Common myeloid progenitor, CD34-positive (primary cell): ENCODE measurements at regions of chr11 and their contacts with region 1.

Region 1: DNA sequence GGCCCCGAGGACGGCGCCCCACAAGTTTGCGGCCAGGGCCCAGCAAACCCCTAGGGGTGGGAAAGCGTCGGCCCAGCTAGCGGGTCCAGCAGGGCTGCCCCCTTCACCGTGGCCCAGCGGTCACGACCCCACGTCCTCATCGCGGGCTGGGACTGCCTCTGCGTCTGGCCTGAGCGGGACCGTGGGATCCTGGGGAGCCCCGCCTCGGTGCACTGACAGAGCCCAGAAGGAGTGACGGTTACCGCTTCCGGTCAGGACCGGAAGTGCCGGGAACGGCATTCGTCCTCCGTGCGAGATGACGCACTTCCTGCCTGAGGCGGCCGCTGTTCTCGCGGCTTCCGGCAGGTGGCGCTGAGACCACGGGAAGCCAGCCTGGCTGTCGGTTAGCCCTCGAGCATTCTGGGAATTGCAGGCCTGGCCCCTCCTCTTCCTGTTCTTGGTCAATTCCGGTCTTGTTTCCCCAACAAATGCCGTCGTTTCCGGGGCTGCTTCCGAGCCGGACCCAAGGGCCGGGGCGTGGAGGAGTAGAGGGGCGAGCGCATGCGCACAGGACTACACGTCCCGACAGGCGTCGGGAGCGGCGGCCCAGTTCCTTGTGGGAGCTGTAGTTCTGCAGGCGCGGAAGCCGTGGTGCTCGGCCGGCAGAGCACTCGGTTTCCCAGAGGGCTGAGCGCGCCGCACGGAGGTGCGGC is at the start of gene TSSC4:
- DNase-seq: peak; percentile 100
- H3K4me3 ChIP-seq: peak within 1 kb of the TSS; percentile 90 to 100 (median 99)
- H3K27ac ChIP-seq: peak within 1 kb of the TSS; percentile 96 to 97
- H3K4me1 ChIP-seq: peaks cover 0 to 26% (median 25%) of the 10 kb centered on the region in 4 experiments
- H3K27me3 ChIP-seq: no peaks in the 10 kb centered on the region

Region 2: GRCh38 chr11:2249189-2249916 is 150.9 kb before region 1 on chr11:
- CTCF ChIA-PET with region 1: no interaction called
- POLR2A ChIA-PET with region 1: no interaction called
- DNase-seq: no peak
- H3K4me3 ChIP-seq: no peak overlapping the region
- H3K27ac ChIP-seq: no peak overlapping the region
- H3K4me1 ChIP-seq: no peaks in the 10 kb centered on the region
- H3K27me3 ChIP-seq: no peaks in the 10 kb centered on the region

Region 3: DNA sequence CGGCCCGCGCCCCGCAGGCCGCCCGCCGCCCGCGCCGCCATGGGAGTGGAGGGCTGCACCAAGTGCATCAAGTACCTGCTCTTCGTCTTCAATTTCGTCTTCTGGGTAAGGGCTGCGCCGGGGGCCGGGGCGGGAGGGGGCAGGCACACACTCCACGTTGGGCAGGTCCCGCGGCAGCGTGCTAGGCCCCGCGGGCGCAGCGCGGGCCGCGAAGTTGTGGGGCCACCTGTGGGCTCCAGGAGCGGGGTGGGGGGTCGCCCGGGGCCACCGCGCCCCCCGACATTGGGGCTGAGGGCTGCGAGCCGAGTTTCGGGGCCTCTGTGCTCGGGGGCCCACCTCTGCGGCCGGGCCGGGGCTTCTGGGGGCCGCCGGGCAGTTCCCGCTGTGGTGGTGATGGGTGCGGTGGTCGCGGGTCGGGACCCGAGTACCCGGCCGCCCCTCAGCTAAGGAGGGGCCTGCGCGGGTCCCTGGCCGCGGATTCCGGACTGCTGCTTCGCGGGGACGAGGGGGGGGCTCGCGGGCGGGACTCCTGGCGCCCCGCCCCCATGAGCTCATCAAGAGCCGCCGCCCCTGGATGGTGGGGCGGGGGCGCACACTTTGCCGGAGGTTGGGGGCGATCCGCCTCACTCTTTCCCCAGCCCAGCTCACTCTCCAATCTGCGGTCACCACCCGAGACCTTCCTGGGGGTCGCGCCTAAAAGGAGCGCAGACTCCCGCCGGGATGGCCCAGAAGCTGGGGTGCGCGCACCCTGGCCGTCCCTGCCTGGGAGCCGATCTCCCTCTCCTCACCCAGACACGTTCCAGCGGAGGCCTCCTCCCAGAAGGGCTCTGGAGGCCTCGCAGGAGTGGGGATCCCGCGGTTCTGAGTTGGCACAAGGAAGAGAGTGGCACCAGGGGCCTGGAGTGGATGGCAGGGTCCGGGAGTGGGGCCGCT is 22.4 kb before region 1 on chr11:
- CTCF ChIA-PET with region 1: interaction called, 4 read pairs
- POLR2A ChIA-PET with region 1: interaction called, 11 read pairs
- DNase-seq: peak; percentile 38 to 69 (median 65)
- H3K4me3 ChIP-seq: peak overlapping the region; percentile 67 to 88 (median 79)
- H3K27ac ChIP-seq: peak overlapping the region; percentile 50 to 78
- H3K4me1 ChIP-seq: peaks cover 0 to 39% (median 35%) of the 10 kb centered on the region in 4 experiments
- H3K27me3 ChIP-seq: no peaks in the 10 kb centered on the region

Region 4: GRCh38 chr11:2387266-2387987 is 12.8 kb before region 1 on chr11:
- CTCF ChIA-PET with region 1: interaction called, 4 read pairs
- POLR2A ChIA-PET with region 1: interaction called, 10 read pairs
- DNase-seq: peak in 2 of 3 donors; percentile 60 to 63
- H3K4me3 ChIP-seq: no peak overlapping the region
- H3K27ac ChIP-seq: peak overlapping the region; percentile 27 to 71
- H3K4me1 ChIP-seq: peaks cover 0 to 65% (median 49%) of the 10 kb centered on the region in 4 experiments
- H3K27me3 ChIP-seq: no peaks in the 10 kb centered on the region